ENCODE measurements at regions of chr4 and their contacts with region 1.

Region 1: DNA sequence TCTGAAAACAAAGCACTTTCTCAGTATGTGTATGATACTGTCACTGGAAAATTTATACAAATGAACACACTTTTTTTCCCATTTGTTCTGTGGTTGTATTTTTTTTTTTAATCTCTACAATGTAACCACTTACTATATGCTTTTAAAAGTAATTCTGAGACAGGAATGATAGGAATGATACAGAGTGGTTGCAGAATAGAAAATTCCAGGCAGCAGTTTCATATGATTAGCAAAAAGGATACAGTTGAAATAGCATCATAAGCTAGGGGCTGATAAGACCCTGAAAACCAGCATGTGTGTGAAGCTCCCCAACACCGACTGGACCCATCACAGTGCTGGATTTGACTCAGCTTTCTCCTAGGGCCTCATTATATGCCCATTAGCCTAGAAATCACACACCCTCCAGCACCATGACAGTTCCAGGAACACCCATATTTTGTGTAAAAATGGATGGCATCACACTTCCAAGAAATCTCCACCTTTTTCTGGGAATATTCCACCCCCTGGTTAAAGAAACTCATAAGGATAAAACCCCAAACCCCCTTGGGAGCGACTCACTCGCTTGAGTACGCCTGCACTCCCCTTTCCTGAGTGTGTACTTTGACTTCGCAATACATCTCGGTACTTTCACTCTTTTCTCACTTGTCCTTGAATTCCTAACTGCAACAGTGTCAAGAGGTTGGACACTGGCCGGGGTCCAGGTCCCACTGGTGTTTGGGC is 77.4 kb upstream of the AGA start:
- DNase-seq: no peak
- ATAC-seq: no peak
- H3K4me3 ChIP-seq: no peak overlapping the region
- H3K4me3 Mint-ChIP-seq: no peak overlapping the region
- H3K27ac ChIP-seq: no peak overlapping the region
- H3K27ac Mint-ChIP-seq: no peak overlapping the region
- H3K4me1 ChIP-seq: no peaks in the 10 kb centered on the region
- H3K4me1 Mint-ChIP-seq: no peaks in the 10 kb centered on the region
- H3K27me3 ChIP-seq: no peaks in the 10 kb centered on the region
- H3K27me3 Mint-ChIP-seq: no peaks in the 10 kb centered on the region

Region 2: GRCh38 chr4:177441803-177442622 is 77.6 kb before region 1 on chr4 and contains the start of gene AGA:
- CTCF ChIA-PET with region 1: no interaction called
- POLR2A ChIA-PET with region 1: interaction called in 1 of 2 experiments, 10 read pairs
- DNase-seq: peak; percentile 91 to 97 (median 94)
- ATAC-seq: peak; percentile 91 to 94 (median 92)
- H3K4me3 ChIP-seq: peak within 1 kb of the TSS; percentile 84
- H3K4me3 Mint-ChIP-seq: peak within 1 kb of the TSS; percentile 88 to 93 (median 92)
- H3K27ac ChIP-seq: peak within 1 kb of the TSS; percentile 79
- H3K27ac Mint-ChIP-seq: peak within 1 kb of the TSS; percentile 96 to 97
- H3K4me1 ChIP-seq: peaks cover 18 to 22% of the 10 kb centered on the region in 2 experiments
- H3K4me1 Mint-ChIP-seq: peaks cover 32 to 47% (median 32%) of the 10 kb centered on the region in 3 donors
- H3K27me3 ChIP-seq: no peaks in the 10 kb centered on the region
- H3K27me3 Mint-ChIP-seq: no peaks in the 10 kb centered on the region
- total RNA-seq, gene AGA: 19.7 to 28.2 (median 25.5) TPM